Mammary epithelial cell (primary cell): ENCODE measurements at regions of chr9 and their contacts with region 1.

Region 1: DNA sequence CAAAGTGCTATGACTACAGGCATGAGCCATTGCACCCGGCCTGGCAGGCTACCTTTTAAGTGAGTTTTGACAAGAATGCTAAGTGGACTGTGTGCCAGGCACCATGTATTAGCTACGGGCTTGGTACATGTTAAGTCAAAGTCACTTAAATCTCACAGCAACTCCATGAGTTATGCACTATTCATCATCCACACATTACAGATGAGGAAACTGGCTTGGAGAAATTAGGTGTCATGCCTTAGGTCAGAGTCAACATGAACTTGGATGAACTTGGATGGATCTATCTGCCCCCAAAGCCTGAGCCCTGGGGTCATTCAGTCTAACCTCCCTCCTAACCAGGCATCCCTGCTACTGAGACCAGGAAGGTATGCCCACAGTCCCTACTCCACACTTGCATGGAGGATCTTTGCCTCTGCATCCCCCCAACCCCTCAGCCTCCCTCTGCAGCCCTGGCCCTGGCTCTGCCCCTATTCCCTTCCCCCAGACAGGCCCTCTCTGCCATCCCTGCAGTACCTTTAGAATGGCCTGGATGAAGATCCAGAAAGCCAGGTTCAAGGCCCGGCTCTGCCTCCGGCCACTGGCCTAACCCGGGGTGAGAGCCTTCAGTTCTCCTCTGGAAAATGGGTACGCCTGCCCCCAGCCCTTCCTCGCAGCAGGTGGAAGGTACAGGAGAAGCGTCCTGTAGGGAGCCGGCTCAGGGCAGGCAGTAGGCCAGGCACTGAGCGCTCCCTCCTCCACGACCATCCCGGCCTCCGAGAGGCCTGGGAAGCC is 685 bp upstream of the ADGRD2 start:
- DNase-seq: no peak
- H3K4me3 ChIP-seq: no peak overlapping the region
- H3K27ac ChIP-seq: no peak overlapping the region
- H3K4me1 ChIP-seq: peaks cover 15% of the 10 kb centered on the region
- H3K27me3 ChIP-seq: no peaks in the 10 kb centered on the region
- CTCF ChIP-seq: no peak

Region 2: GRCh38 chr9:124465736-124466135 is 16.2 kb after region 1 on chr9:
- CTCF ChIA-PET with region 1: interaction called, 13 read pairs
- dilution Hi-C with region 1: no loop called
- in situ Hi-C with region 1: no loop called
- intact Hi-C with region 1: no loop called
- DNase-seq: no peak
- H3K4me3 ChIP-seq: no peak overlapping the region
- H3K27ac ChIP-seq: no peak overlapping the region
- H3K4me1 ChIP-seq: no peaks in the 10 kb centered on the region
- H3K27me3 ChIP-seq: no peaks in the 10 kb centered on the region
- CTCF ChIP-seq: no peak